ENCODE measurements at regions of chr5 and their contacts with region 1.

Region 1: GRCh38 chr5:95664204-95664786 is 17.7 kb downstream of the RFESD start:
- DNase-seq: peak in 19 of 35 experiments; percentile 4 to 64 (median 24)
- ATAC-seq: no peak
- H3K4me3 ChIP-seq: no peak overlapping the region
- H3K4me3 Mint-ChIP-seq: no peak overlapping the region
- H3K27ac ChIP-seq: no peak overlapping the region
- H3K27ac Mint-ChIP-seq: no peak overlapping the region
- H3K4me1 ChIP-seq: peaks cover 0 to 5% of the 10 kb centered on the region in 2 experiments
- H3K4me1 Mint-ChIP-seq: peaks cover 0 to 3% (median 0%) of the 10 kb centered on the region in 3 donors
- H3K27me3 ChIP-seq: no peaks in the 10 kb centered on the region
- H3K27me3 Mint-ChIP-seq: no peaks in the 10 kb centered on the region

Region 2: DNA sequence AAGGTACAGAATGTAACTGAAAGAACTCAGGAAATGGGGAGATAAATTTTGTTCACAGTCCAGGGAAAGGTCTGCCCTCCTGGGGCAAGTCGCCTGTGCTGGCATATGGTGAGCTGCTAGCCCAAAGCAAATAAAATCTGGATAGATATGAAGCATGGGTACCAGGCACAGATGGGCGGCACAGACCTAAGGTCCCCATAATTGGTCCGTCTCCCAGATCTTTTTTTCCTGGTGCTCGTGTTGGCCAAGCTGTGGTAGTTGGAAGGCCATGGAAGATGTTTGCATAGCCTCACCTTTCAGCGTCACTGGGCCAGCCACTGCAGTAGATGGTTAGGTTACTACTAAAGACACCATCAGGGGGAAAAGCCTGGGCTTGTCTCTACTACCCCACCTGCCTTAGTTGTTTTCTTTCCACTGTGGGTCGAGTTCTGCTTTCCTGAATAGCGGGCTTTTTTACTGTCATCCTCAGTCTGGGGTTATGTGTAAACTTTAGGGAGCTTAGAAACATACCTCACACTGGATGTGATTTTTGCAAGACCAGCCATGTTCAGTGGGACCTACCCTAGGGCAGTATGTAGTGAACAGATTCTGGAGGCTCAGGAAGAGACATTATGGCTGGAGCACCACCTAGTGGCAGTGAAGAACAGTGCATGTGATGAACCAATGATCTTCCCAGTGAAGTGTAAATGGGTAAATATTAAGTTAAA is 182.4 kb after region 1 on chr5:
- CTCF ChIA-PET with region 1: interaction called, 11 to 13 read pairs
- POLR2A ChIA-PET with region 1: no interaction called
- DNase-seq: peak; percentile 28 to 87 (median 60)
- ATAC-seq: peak; percentile 74 to 80 (median 76)
- H3K4me3 ChIP-seq: no peak overlapping the region
- H3K4me3 Mint-ChIP-seq: no peak overlapping the region
- H3K27ac ChIP-seq: no peak overlapping the region
- H3K27ac Mint-ChIP-seq: no peak overlapping the region
- H3K4me1 ChIP-seq: peaks cover 7 to 17% of the 10 kb centered on the region in 2 experiments
- H3K4me1 Mint-ChIP-seq: peaks cover 14 to 23% (median 22%) of the 10 kb centered on the region in 3 donors
- H3K27me3 ChIP-seq: no peaks in the 10 kb centered on the region
- H3K27me3 Mint-ChIP-seq: peaks cover 3% of the 10 kb centered on the region in 2 donors